ENCODE measurements at regions of chr3 and their contacts with region 1.

Region 1: GRCh38 chr3:21752749-21753347 is 1.8 kb upstream of the ZNF385D start:
- ATAC-seq: peak in 3 of 8 experiments; percentile 56 to 69 (median 56)
- H3K4me3 ChIP-seq: no peak overlapping the region
- H3K27ac ChIP-seq: no peak overlapping the region
- H3K4me1 ChIP-seq: peaks cover 19 to 30% of the 10 kb centered on the region in 2 donors

Region 2: DNA sequence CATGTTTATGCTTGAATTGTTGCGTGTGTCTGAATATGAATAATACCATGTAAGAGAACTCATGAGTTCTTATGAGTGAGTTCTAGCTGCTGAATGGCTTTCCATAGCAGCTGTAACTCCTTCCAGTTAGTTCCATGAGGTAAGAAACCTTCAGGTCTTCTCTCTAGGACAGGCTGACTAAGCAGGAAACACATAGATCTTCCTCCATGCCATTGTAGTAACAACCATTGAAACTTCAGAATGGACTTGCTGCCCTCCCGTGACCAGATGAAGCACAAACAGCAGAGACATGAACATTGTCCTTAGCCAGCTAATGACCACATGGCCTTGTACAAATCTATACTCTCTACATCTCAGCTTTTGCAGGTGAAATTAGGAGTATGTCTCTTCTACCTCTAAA is 201.8 kb before region 1 on chr3:
- in situ Hi-C with region 1: no loop called
- ATAC-seq: peak in 6 of 8 experiments; percentile 44 to 78 (median 62)
- H3K4me3 ChIP-seq: no peak overlapping the region
- H3K27ac ChIP-seq: no peak overlapping the region
- H3K4me1 ChIP-seq: no peaks in the 10 kb centered on the region

Region 3: GRCh38 chr3:22063500-22063899 is 310.7 kb after region 1 on chr3:
- in situ Hi-C with region 1: no loop called
- ATAC-seq: peak in 2 of 8 experiments; percentile 29 to 91
- H3K4me3 ChIP-seq: no peak overlapping the region
- H3K27ac ChIP-seq: no peak overlapping the region
- H3K4me1 ChIP-seq: no peaks in the 10 kb centered on the region

Region 4: DNA sequence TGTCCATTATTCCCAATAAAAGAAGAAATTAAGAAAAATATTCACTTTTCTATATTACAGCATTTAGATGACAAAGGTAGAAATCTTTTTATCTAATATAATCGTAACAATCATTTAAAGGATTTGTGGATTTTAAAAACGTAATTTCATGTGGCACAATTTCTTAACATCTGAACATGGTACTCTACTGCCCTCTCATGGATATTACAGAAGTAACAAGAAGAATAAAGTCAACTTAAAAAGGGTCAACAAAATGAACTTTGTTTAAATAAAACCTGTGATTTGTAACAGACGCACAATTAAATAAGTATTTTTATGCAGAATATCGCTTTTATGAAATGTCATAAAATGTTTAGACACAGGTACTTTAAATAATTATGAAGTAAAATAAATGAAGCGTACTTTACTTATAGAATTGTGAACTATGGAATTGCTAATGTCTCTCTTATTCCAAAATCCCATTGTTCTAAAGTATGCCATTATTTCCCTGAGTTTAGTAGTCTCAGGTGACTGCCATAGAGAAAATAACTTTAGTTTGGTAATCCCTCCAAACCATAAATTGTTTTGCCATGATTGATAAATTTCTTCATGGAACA is 365.0 kb after region 1 on chr3:
- in situ Hi-C with region 1: loop called in 1 of 9 experiments (anchors 25 kb)
- ATAC-seq: no peak
- H3K4me3 ChIP-seq: no peak overlapping the region
- H3K27ac ChIP-seq: no peak overlapping the region
- H3K4me1 ChIP-seq: peaks cover 0 to 6% of the 10 kb centered on the region in 2 donors